ENCODE measurements at regions of chr13 and their contacts with region 1.

Region 1: DNA sequence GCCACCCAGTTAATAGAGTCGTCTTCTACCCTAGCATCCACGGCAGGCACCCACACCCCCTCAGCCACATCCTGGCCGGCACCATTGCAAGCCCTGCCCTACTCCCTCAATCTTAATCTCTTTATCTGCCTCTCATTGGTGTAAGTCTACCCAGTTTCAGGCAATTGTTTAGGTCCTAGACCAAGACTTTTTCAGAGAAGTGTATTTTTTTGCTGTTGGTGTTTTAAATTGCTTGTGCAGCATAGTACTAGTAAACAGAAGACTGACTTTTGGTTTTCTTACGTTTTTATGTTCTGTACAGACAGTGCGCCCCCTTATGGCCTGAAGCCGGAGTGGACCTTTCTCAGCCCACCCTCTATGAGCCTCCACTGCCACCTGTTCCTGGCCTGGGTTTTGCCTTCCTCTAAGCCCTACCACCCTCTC is 2.3 kb upstream of the LCP1 start:
- DNase-seq: peak; percentile 88
- ATAC-seq: peak; percentile 48
- H3K4me3 ChIP-seq: peak overlapping the region in 4 of 5 experiments; percentile 19 to 99 (median 48)
- H3K4me3 Mint-ChIP-seq: peak overlapping the region; percentile 98
- H3K27ac ChIP-seq: peak overlapping the region; percentile 84 to 91
- H3K27ac Mint-ChIP-seq: peak overlapping the region; percentile 96
- H3K4me1 ChIP-seq: peaks cover 26 to 27% of the 10 kb centered on the region in 2 donors
- H3K4me1 Mint-ChIP-seq: peaks cover 45% of the 10 kb centered on the region
- H3K27me3 ChIP-seq: no peaks in the 10 kb centered on the region
- H3K27me3 Mint-ChIP-seq: no peaks in the 10 kb centered on the region
- CTCF ChIP-seq: peak; percentile 83

Region 2: DNA sequence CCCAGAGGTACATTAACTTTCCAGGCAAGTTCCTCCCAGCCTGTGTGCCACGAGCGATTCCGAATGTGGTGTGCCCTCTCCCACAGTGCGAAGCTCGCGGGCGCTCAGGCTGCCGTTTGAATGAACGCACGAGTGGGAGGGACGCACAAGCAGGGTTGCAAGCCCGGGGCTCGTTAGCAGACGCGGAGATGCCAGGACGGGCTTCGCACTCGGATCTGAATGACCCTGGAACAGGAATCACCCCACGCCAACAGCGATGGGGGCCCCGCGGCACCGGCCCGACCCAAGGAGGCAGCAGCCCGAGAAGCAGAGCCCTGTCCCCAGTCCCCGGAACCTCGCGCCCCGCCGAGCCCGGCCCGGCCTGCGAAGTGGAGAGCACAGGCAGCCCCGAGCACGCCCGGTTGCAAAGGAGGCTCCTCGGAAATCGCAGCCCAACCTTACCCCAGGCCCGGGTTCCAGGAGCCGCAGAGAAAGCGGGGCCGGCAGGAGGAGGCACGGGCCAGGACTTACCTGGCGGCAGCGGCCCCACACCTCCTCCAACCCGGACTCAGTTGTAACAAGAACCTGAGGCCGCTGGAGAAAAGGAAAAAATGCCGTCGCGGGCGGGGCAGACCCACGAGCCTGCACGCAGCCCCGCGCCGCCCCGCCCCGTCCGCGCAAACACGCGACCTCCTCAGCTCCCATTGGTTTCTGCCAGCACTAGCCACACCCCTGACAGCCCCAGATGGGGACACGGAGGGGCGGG is 766.3 kb before region 1 on chr13 and contains the start of gene SLC25A30:
- CTCF ChIA-PET with region 1: no interaction called
- POLR2A ChIA-PET with region 1: no interaction called
- intact Hi-C with region 1: loop called (anchors 5 kb)
- DNase-seq: peak; percentile 92
- ATAC-seq: peak; percentile 95
- H3K4me3 ChIP-seq: peak within 1 kb of the TSS; percentile 68 to 91 (median 90)
- H3K4me3 Mint-ChIP-seq: peak within 1 kb of the TSS; percentile 97
- H3K27ac ChIP-seq: peak within 1 kb of the TSS; percentile 70 to 87
- H3K27ac Mint-ChIP-seq: peak within 1 kb of the TSS; percentile 96
- H3K4me1 ChIP-seq: peaks cover 9 to 11% of the 10 kb centered on the region in 2 donors
- H3K4me1 Mint-ChIP-seq: peaks cover 21% of the 10 kb centered on the region
- H3K27me3 ChIP-seq: no peaks in the 10 kb centered on the region
- H3K27me3 Mint-ChIP-seq: no peaks in the 10 kb centered on the region
- CTCF ChIP-seq: no peak
- total RNA-seq, gene SLC25A30: 16.9 and 25.8 TPM in 2 replicates

Region 3: DNA sequence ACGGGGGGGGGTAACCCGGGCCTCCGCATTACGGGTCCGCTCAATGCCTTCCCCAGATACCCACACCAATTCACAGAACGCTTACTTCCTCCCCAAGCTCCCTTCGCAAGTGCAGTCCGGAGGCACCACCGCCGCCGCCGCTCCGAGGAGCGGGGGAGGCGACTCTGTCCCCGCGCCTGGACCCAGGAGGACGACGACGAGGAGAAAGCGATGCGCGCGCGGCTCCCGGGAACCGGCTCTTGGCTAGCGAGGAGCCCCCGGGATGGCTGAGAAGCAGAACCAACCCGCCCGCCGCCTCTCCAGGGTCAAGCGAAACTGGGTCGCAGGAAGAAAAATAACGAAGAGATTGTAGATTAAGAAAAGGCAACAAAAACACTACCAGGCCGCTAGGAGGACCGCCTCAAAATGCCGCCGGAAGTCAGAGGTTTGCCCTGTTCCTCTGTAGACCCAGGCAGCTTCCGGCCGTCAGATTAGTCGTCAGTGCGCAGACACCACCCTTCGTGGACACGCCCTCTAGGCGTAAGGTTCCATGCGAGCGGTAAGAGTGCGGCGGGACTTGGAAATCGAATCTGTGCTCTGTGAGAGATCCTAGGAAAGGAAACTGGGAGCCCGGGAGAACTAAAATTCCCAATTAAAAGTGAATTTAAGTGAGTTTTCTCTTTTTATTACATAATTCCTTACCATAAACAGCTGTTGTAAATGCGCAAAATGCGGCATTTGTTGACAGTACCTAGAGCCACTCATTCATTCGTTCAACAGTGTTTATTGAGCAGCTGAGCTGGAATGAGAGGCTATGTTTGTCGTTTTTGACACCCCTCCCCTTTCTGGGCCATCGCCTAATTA is 131.7 kb before region 1 on chr13 and contains the start of gene ZC3H13:
- CTCF ChIA-PET with region 1: no interaction called
- POLR2A ChIA-PET with region 1: no interaction called
- intact Hi-C with region 1: loop called (anchors 1 kb)
- DNase-seq: peak; percentile 95
- ATAC-seq: peak; percentile 99
- H3K4me3 ChIP-seq: peak within 1 kb of the TSS; percentile 84 to 95 (median 88)
- H3K4me3 Mint-ChIP-seq: peak within 1 kb of the TSS; percentile 96
- H3K27ac ChIP-seq: peak within 1 kb of the TSS; percentile 89 to 96
- H3K27ac Mint-ChIP-seq: peak within 1 kb of the TSS; percentile 95
- H3K4me1 ChIP-seq: peaks cover 19 to 26% of the 10 kb centered on the region in 2 donors
- H3K4me1 Mint-ChIP-seq: peaks cover 33% of the 10 kb centered on the region
- H3K27me3 ChIP-seq: peaks cover 0 to 3% (median 0%) of the 10 kb centered on the region in 4 experiments
- H3K27me3 Mint-ChIP-seq: peaks cover 6% of the 10 kb centered on the region
- CTCF ChIP-seq: peak; percentile 65
- total RNA-seq, gene ZC3H13: 61.9 and 65.7 TPM in 2 replicates

Region 4: GRCh38 chr13:46146899-46147298 is 37.4 kb before region 1 on chr13:
- CTCF ChIA-PET with region 1: no interaction called
- POLR2A ChIA-PET with region 1: no interaction called
- intact Hi-C with region 1: loop called (anchors 5 kb)
- DNase-seq: no peak
- ATAC-seq: no peak
- H3K4me3 ChIP-seq: no peak overlapping the region
- H3K4me3 Mint-ChIP-seq: no peak overlapping the region
- H3K27ac ChIP-seq: no peak overlapping the region
- H3K27ac Mint-ChIP-seq: peak overlapping the region; percentile 20
- H3K4me1 ChIP-seq: no peaks in the 10 kb centered on the region
- H3K4me1 Mint-ChIP-seq: no peaks in the 10 kb centered on the region
- H3K27me3 ChIP-seq: no peaks in the 10 kb centered on the region
- H3K27me3 Mint-ChIP-seq: no peaks in the 10 kb centered on the region
- CTCF ChIP-seq: no peak

Region 5: GRCh38 chr13:46168341-46168740 is 15.9 kb before region 1 on chr13:
- CTCF ChIA-PET with region 1: interaction called, 26 read pairs
- POLR2A ChIA-PET with region 1: interaction called, 10 read pairs
- intact Hi-C with region 1: loop called (anchors 1 kb)
- DNase-seq: peak; percentile 69
- ATAC-seq: peak; percentile 18
- H3K4me3 ChIP-seq: no peak overlapping the region
- H3K4me3 Mint-ChIP-seq: peak overlapping the region; percentile 40
- H3K27ac ChIP-seq: peak overlapping the region; percentile 5 to 91
- H3K27ac Mint-ChIP-seq: peak overlapping the region; percentile 94
- H3K4me1 ChIP-seq: peaks cover 92 to 98% of the 10 kb centered on the region in 2 donors
- H3K4me1 Mint-ChIP-seq: peaks cover 90% of the 10 kb centered on the region
- H3K27me3 ChIP-seq: no peaks in the 10 kb centered on the region
- H3K27me3 Mint-ChIP-seq: no peaks in the 10 kb centered on the region
- CTCF ChIP-seq: no peak

Region 6: DNA sequence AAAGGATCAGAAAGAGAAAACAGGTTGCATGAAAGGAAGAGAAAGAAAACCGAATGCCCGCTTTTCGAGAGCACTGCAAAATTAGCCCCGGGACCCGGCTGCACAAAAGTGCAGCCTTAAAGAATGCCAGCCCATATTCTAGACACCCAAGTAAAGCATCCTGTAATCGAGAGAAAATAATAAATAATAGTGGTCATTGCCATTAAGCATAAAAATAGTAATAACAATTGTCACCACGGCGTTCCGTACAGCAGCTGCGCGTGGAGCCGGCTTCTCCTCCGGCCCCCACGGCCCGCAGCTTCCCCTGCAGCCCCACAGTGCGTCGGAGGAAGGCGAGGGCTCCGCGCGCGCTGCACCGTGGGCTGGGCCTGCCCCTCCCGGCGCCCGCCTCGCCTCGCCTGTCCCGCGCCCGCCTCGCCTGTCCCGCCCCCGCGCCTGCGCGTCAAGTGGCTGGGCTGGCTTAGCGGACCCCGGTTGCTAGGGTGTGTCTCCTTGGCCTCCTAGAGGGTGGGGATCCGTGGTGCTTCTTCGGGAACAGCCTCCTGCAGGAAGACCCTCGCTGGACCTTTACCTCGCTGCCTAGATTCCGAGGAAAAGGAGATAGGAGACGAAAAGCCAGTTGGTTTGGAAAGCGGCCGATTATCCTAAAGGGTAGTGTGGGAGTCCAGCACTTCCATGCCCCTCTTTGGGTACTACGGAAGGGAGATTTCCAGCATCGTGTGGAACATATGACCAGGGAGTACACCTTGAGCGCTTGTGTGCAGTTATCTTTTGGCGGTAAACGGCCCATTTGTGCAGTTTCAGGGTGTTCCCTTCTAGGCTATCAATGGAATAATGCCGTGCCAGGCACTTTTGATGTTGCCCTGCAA is 27.4 kb after region 1 on chr13 and contains the start of gene LRRC63:
- CTCF ChIA-PET with region 1: interaction called, 4 read pairs
- POLR2A ChIA-PET with region 1: interaction called, 3 read pairs
- intact Hi-C with region 1: loop called (anchors 2 kb)
- DNase-seq: peak; percentile 76
- ATAC-seq: peak; percentile 99
- H3K4me3 ChIP-seq: peak within 1 kb of the TSS; percentile 47 to 85 (median 63)
- H3K4me3 Mint-ChIP-seq: peak within 1 kb of the TSS; percentile 87
- H3K27ac ChIP-seq: no peak within 1 kb of the TSS
- H3K27ac Mint-ChIP-seq: peak within 1 kb of the TSS; percentile 59
- H3K4me1 ChIP-seq: peaks cover 10 to 11% of the 10 kb centered on the region in 2 donors
- H3K4me1 Mint-ChIP-seq: peaks cover 16% of the 10 kb centered on the region
- H3K27me3 ChIP-seq: no peaks in the 10 kb centered on the region
- H3K27me3 Mint-ChIP-seq: peaks cover 2% of the 10 kb centered on the region
- CTCF ChIP-seq: no peak
- total RNA-seq, gene LRRC63: 0.25 TPM in 1 of 2 replicates, not detected in the other

Region 7: GRCh38 chr13:46796515-46797474 is 612.5 kb after region 1 on chr13 and contains the start of gene ESD:
- CTCF ChIA-PET with region 1: no interaction called
- POLR2A ChIA-PET with region 1: no interaction called
- intact Hi-C with region 1: loop called (anchors 5 kb)
- DNase-seq: peak; percentile 89
- ATAC-seq: peak; percentile 93
- H3K4me3 ChIP-seq: peak within 1 kb of the TSS; percentile 56 to 99 (median 77)
- H3K4me3 Mint-ChIP-seq: peak within 1 kb of the TSS; percentile 90
- H3K27ac ChIP-seq: peak within 1 kb of the TSS; percentile 78 to 89
- H3K27ac Mint-ChIP-seq: peak within 1 kb of the TSS; percentile 93
- H3K4me1 ChIP-seq: peaks cover 16 to 18% of the 10 kb centered on the region in 2 donors
- H3K4me1 Mint-ChIP-seq: peaks cover 30% of the 10 kb centered on the region
- H3K27me3 ChIP-seq: no peaks in the 10 kb centered on the region
- H3K27me3 Mint-ChIP-seq: no peaks in the 10 kb centered on the region
- CTCF ChIP-seq: no peak
- total RNA-seq, gene ESD: 52.9 and 53.4 TPM in 2 replicates

Measured in B cell (primary cell).